T-cell (primary cell): ENCODE measurements at regions of chrX and their contacts with region 1.

Region 1: DNA sequence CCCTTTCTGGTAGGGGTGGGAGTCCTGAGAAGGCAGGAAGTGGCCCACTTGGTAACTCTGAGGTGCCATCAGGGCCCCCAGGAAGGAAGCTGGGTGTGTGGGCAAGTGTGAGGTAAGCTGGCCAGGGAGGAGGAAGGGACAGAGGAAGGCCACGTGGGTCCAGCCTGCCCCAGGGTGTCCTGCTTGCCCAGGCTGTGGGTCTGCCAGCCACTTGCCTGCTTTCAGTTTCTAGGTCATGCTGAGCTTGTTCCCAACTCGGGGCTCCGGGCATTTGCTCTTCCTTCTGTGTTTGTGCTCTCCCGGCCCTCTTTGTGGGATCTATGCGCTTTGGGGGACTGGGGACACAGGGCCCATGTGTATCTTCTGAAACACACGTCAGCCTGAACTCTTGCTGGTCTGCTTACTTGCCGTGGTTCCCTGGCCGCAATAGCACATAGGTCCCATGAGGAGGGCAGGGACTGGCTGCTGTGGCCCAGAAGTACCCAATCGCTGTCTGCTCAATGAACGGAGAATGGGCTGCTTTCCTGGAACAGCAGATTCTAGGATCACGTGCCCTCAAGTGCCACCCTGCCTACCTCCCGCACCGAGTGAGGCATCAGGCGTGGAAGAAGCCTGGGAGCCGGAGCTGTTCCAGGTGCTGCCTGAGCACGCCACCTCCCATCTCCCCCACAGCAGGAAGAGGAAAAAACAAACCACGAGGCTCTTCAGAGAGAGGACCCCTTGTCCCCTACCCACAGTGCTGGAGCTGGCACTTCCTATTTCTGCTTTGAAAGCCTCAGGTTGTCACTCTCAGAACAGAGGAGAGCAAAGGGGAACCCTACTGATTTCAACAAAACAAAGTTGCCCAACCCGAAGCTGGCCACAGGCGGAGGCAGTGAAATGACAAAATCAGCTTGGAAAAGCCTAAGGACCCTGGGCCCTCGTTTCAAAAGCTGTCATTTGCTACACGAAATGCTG is 3.9 kb downstream of the G6PD start:
- DNase-seq: peak in 5 of 35 experiments; percentile 7 to 46 (median 14)
- ATAC-seq: no peak
- H3K4me3 ChIP-seq: peak overlapping the region in 1 of 2 donors; percentile 12
- H3K4me3 Mint-ChIP-seq: peak overlapping the region; percentile 59 to 73 (median 61)
- H3K27ac ChIP-seq: peak overlapping the region; percentile 67
- H3K27ac Mint-ChIP-seq: peak overlapping the region; percentile 84 to 90
- H3K4me1 ChIP-seq: peaks cover 0 to 52% of the 10 kb centered on the region in 2 experiments
- H3K4me1 Mint-ChIP-seq: peaks cover 26 to 38% (median 33%) of the 10 kb centered on the region in 3 donors
- H3K27me3 ChIP-seq: no peaks in the 10 kb centered on the region
- H3K27me3 Mint-ChIP-seq: peaks cover 0 to 6% of the 10 kb centered on the region in 2 donors

Region 2: DNA sequence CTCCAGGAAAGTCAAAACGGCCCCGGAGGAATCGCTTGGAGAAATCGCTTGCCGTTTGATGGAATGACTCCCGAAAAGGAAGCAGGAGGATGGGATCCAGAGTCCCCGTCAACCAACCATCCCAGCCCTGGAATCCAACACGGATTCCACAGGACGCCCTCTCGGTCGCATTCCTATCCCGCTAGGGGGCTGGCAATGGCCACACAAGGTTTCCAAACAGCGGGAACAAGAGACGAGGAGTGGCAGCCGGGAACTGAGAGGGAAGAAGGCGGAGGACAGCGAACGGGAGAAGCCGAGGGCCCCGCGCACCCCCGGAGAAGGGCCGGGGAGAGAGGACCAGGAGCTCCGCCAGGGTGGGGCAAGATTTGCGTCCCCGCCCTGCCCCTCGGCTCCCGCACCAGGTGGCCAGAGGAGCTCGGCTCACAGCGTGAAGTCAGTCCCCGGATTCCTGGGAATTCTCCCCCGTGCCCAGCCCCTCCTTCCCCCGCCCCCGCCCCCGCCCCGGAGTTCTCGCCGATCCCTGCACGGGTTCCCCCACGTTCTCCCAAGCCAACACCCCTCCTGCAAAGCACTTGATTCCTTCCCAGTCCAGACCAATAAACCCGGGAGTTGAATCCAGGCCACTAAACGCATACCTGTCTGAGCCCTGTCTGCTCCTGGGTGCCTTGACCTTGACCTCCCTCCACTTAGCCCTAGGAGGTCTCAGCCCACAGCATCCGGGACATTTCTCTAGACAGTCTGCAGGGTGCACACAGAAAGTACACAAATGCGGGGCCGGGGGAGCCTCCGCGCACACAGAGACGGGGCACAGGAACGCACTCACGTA is 713.8 kb before region 1 on chrX:
- CTCF ChIA-PET with region 1: no interaction called
- POLR2A ChIA-PET with region 1: interaction called in 1 of 2 experiments, 11 read pairs
- DNase-seq: peak in 2 of 35 experiments; percentile 16 to 26
- ATAC-seq: peak; percentile 22 to 64 (median 47)
- H3K4me3 ChIP-seq: peak overlapping the region in 1 of 2 donors; percentile 37
- H3K4me3 Mint-ChIP-seq: peak overlapping the region; percentile 46 to 73 (median 66)
- H3K27ac ChIP-seq: no peak overlapping the region
- H3K27ac Mint-ChIP-seq: peak overlapping the region in 1 of 2 donors; percentile 65
- H3K4me1 ChIP-seq: peaks cover 0 to 33% of the 10 kb centered on the region in 2 experiments
- H3K4me1 Mint-ChIP-seq: peaks cover 20 to 24% (median 23%) of the 10 kb centered on the region in 3 donors
- H3K27me3 ChIP-seq: peaks cover 0 to 10% of the 10 kb centered on the region in 2 experiments
- H3K27me3 Mint-ChIP-seq: peaks cover 5 to 13% of the 10 kb centered on the region in 2 donors

Region 3: GRCh38 chrX:154360155-154360713 is 182.5 kb before region 1 on chrX:
- CTCF ChIA-PET with region 1: no interaction called
- POLR2A ChIA-PET with region 1: interaction called in 1 of 2 experiments, 10 read pairs
- DNase-seq: no peak
- ATAC-seq: no peak
- H3K4me3 ChIP-seq: no peak overlapping the region
- H3K4me3 Mint-ChIP-seq: no peak overlapping the region
- H3K27ac ChIP-seq: peak overlapping the region; percentile 52
- H3K27ac Mint-ChIP-seq: peak overlapping the region in 1 of 2 donors; percentile 34
- H3K4me1 ChIP-seq: peaks cover 0 to 92% of the 10 kb centered on the region in 2 experiments
- H3K4me1 Mint-ChIP-seq: peaks cover 9 to 44% (median 20%) of the 10 kb centered on the region in 3 donors
- H3K27me3 ChIP-seq: no peaks in the 10 kb centered on the region
- H3K27me3 Mint-ChIP-seq: no peaks in the 10 kb centered on the region